GM13976 (cell line): ENCODE measurements at regions of chr15 and their contacts with region 1.

Region 1: GRCh38 chr15:69058830-69059556 is 44.5 kb downstream of the NOX5 start:
- DNase-seq: peak; percentile 81
- CTCF ChIP-seq: peak; percentile 70

Region 2: DNA sequence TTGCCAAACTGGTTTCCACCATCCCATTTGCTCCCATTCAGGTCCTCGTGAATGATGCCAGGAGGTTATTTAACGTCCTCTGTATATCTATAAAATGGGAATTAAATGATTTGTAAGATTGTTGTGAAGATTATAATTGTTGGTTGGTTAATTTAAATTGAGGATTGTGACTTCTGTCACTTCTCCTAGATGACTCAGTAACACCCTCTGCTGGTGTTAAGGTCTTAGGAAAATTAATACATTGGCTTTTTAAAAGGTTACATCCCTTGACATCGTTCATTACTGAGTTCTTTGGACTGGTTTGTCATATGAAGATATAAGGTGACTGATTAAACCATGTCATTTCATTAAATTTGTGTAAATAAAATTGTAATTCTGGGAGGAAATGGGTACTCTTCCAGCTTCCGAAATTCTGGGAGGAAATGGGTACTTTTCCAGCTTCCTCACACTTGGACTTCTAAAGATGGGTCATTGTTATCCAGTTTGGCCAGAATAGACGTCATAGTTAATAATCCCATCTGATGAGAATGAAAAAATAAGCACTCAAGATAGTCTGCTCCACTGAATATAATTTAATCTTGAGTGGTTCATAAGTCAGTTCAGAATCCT is 206.5 kb after region 1 on chr15:
- in situ Hi-C with region 1: loop called (anchors 25 kb)
- DNase-seq: no peak
- CTCF ChIP-seq: peak; percentile 8

Region 3: DNA sequence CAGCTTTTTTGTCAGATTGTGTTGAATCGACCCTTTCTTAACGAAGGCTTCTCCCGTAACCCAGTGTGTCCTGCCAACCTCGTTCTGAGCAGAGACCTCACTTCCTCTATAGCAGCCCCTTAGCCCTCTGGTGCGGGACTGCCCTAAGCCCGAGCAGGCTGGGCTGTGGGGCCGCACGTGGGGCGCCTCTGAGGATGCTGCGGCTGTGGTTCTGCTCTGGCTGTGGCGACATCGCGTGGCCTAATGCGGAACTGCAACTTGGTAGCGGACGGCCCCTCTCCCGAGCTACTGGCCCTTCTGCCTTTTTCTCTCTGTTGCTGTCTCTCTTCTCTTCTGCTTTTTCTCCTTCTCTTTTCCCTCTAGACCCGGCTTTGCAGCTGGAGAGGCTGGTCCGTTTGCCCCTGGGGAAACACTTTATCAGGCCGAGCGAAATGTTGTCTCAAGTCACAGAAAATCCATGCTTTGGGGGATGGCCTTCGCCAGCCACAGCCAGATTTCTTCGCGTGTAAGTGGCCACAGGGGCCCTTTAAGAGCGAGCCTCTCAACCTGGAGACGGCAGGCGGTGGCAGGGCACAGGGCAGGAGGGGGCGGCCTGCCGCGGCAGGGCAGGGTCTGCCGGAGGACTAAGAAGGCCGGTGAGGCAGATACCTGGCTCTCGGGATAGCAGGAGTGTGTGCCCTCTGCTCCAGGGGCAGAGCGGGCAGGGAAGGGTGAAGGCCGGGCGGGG is 335.7 kb after region 1 on chr15:
- in situ Hi-C with region 1: loop called (anchors 25 kb)
- DNase-seq: peak; percentile 91
- CTCF ChIP-seq: peak; percentile 93